ENCODE measurements at regions of chr10 and their contacts with region 1.

Region 1: DNA sequence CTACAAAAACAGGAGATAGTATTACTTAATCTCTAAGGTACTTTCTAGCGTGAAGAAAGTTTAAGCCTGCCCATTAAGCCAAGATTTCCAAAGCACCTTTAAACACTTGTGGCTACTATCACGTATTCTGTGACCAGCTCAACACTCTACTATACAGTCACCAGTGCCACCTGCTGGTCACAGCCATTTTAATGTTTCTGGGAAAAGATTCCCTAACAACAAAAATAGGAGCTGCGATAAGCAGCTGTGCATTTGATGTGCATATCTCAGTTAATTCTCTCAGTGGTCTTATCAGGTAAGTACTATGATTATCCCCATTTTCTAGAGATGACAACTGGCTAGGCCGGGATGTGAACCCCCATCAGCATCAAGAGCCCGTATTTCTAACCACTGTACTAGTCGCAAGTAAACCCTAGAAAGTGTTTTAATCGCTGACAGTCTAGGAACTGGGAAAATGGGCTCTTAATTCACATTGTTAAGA is 860 bp downstream of the SEC31B start:
- DNase-seq: peak; percentile 71
- H3K4me3 ChIP-seq: peak overlapping the region in 1 of 2 experiments; percentile 30; a peak in 2 of 4 replicates
- H3K27ac ChIP-seq: no peak overlapping the region
- H3K4me1 ChIP-seq: peaks cover 5 to 8% of the 10 kb centered on the region in 2 experiments; a peak in 3 of 4 replicates
- H3K27me3 ChIP-seq: no peaks in the 10 kb centered on the region
- CTCF ChIP-seq: peak; percentile 85
- EP300 ChIP-seq: no peak
- RAD21 ChIP-seq: peak; percentile 75

Region 2: DNA sequence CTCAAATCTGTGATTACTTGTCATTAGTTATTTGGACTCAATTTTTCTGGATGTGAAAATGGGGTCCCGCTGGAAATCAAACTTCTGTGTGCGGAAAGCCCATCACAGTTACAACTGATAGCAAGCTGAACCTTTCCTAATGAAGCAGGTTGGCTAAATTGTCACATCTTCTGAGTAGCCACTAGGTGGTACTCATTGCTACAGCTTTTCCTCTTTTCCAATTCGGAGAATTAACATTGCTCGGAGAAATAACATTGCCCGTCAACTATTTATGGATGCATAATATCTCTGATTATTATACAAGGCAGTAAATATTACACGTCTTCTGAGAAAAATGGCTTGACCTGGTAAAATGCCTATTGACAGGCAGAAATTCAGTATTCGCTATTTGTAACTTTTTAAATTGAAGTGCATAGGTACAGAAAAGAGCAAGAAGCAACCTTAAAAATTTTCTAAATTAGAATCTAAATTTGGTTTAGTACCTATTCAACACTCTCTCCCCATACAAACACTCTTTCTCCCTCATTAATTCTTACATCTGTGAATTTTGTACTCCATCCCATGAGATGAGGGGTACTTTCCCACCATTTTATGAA is 215.0 kb before region 1 on chr10:
- CTCF ChIA-PET with region 1: interaction called, 27 read pairs
- POLR2A ChIA-PET with region 1: no interaction called
- DNase-seq: peak; percentile 57
- H3K4me3 ChIP-seq: no peak overlapping the region; a peak in 1 of 4 replicates
- H3K27ac ChIP-seq: no peak overlapping the region
- H3K4me1 ChIP-seq: no peaks in the 10 kb centered on the region
- H3K27me3 ChIP-seq: peaks cover 31% of the 10 kb centered on the region
- CTCF ChIP-seq: peak; percentile 70
- EP300 ChIP-seq: no peak
- RAD21 ChIP-seq: peak; percentile 76

Region 3: GRCh38 chr10:100346765-100347567 is 171.8 kb before region 1 on chr10 and contains the start of gene SCD:
- CTCF ChIA-PET with region 1: interaction called, 126 read pairs
- POLR2A ChIA-PET with region 1: interaction called, 7 read pairs
- DNase-seq: peak; percentile 93
- H3K4me3 ChIP-seq: peak within 1 kb of the TSS; percentile 90 to 95
- H3K27ac ChIP-seq: peak within 1 kb of the TSS in 1 of 2 experiments; percentile 94; a peak in 2 of 4 replicates
- H3K4me1 ChIP-seq: peaks cover 0 to 51% of the 10 kb centered on the region in 2 experiments; a peak in 1 of 4 replicates
- H3K27me3 ChIP-seq: no peaks in the 10 kb centered on the region
- CTCF ChIP-seq: no peak
- EP300 ChIP-seq: 0 out of 4 replicates have a peak, but pooled peaks of 1 of the 2 experiments have one; percentile 10
- RAD21 ChIP-seq: no peak
- polyA plus RNA-seq, gene SCD: 19.7 and 26.4 TPM in 2 replicates

Region 4: DNA sequence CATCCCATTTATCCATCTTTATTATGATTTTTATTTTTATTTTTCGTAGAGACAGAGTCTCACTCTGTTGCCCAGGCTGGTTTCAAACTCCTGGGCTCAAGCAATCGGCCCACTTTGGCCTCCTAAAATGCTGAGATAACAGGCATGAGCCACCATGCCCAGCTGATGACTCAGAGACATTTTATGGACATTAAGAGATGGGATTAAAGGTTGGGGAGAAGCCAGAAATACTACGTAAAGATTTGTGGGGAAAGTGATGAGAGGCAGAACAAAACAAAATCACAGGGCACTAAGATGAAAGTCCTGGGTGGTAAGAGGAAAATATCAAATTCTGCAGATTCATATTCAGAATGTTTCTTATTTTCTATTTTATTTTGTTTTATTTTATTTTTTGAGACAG is 48.4 kb before region 1 on chr10:
- CTCF ChIA-PET with region 1: interaction called, 13 read pairs
- POLR2A ChIA-PET with region 1: no interaction called
- DNase-seq: no peak
- H3K4me3 ChIP-seq: no peak overlapping the region
- H3K27ac ChIP-seq: no peak overlapping the region
- H3K4me1 ChIP-seq: peaks cover 0 to 12% of the 10 kb centered on the region in 2 experiments; a peak in 1 of 4 replicates
- H3K27me3 ChIP-seq: no peaks in the 10 kb centered on the region
- CTCF ChIP-seq: no peak
- EP300 ChIP-seq: no peak
- RAD21 ChIP-seq: no peak

Region 5: GRCh38 chr10:100508691-100509150 is 10.1 kb before region 1 on chr10:
- CTCF ChIA-PET with region 1: interaction called, 108 read pairs
- POLR2A ChIA-PET with region 1: no interaction called
- DNase-seq: peak; percentile 70
- H3K4me3 ChIP-seq: no peak overlapping the region
- H3K27ac ChIP-seq: no peak overlapping the region
- H3K4me1 ChIP-seq: peaks cover 0 to 15% of the 10 kb centered on the region in 2 experiments; a peak in 2 of 4 replicates
- H3K27me3 ChIP-seq: no peaks in the 10 kb centered on the region
- CTCF ChIP-seq: peak; percentile 81
- EP300 ChIP-seq: no peak
- RAD21 ChIP-seq: peak; percentile 94

Region 6: GRCh38 chr10:100878291-100878910 is 359.6 kb after region 1 on chr10:
- CTCF ChIA-PET with region 1: interaction called, 26 read pairs
- POLR2A ChIA-PET with region 1: no interaction called
- DNase-seq: peak; percentile 80
- H3K4me3 ChIP-seq: no peak overlapping the region
- H3K27ac ChIP-seq: no peak overlapping the region
- H3K4me1 ChIP-seq: peaks cover 0 to 30% of the 10 kb centered on the region in 2 experiments; a peak in 2 of 4 replicates
- H3K27me3 ChIP-seq: no peaks in the 10 kb centered on the region
- CTCF ChIP-seq: peak; percentile 79
- EP300 ChIP-seq: no peak
- RAD21 ChIP-seq: peak; percentile 96

Measured in SK-N-SH (cell line).